K562 (cell line): ENCODE measurements at regions of chr1 and their contacts with region 1.

Region 1: DNA sequence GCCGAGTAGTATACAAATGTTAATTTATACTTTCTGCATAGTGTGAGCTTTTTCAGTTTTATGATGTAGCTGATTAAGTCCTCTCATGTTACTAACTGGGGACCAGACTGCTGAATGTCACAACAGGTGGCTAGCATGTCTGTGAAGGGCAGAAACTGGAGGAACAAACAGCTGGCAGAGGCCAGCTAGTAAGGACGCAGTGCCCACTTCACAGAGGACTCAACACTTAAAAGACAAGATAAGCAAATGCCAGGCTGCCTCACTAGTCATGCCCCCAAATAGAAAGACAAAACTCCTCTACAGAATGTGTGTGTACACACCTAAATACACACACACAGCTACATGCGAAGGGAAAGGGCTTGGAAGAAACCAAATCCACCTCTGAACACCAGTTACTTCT is 73.8 kb upstream of the ZNF678 start:
- DNase-seq: no peak
- ATAC-seq: no peak
- H3K4me3 ChIP-seq: no peak overlapping the region
- H3K27ac ChIP-seq: no peak overlapping the region
- H3K4me1 ChIP-seq: no peaks in the 10 kb centered on the region
- H3K27me3 ChIP-seq: peaks cover 0 to 15% of the 10 kb centered on the region in 2 experiments; a peak in 2 of 5 replicates
- CTCF ChIP-seq: no peak
- EP300 ChIP-seq: no peak
- POLR2A ChIP-seq: no peak
- RAD21 ChIP-seq: no peak

Region 2: GRCh38 chr1:227666286-227666685 is 176.7 kb after region 1 on chr1:
- CTCF ChIA-PET with region 1: no interaction called
- POLR2A ChIA-PET with region 1: no interaction called
- in situ Hi-C with region 1: no loop called
- intact Hi-C with region 1: loop called (anchors 10 kb)
- DNase-seq: no peak
- ATAC-seq: no peak
- H3K4me3 ChIP-seq: no peak overlapping the region
- H3K27ac ChIP-seq: no peak overlapping the region
- H3K4me1 ChIP-seq: no peaks in the 10 kb centered on the region
- H3K27me3 ChIP-seq: no peaks in the 10 kb centered on the region
- CTCF ChIP-seq: no peak
- EP300 ChIP-seq: no peak
- POLR2A ChIP-seq: no peak
- RAD21 ChIP-seq: no peak

Region 3: DNA sequence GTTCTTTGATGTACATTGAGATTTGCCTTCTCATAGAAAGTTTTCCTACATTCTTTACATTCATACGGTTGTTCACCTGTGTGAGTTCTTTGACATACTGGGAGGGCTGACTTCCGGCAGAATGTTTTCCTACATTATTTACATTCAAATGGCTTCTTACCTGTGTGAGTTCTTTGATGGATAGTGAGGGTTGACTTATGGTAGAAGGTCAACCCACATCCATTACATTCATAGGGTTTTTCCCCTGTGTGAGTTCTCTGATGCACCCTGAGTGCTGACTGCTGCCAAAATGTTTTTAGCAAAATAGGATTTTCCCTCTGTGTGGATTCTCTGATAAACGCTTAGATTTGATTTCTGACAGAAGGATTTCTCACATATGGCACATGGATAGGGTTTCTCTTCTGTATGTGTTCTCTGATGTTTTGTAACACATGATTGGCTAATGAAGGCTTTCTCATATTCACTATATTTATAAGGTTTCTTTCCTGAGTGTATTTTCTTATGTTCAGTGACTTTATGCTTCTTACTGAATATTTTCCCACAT is 207.8 kb after region 1 on chr1:
- CTCF ChIA-PET with region 1: no interaction called
- POLR2A ChIA-PET with region 1: no interaction called
- in situ Hi-C with region 1: no loop called
- intact Hi-C with region 1: loop called (anchors 10 kb)
- DNase-seq: no peak
- ATAC-seq: no peak
- H3K4me3 ChIP-seq: no peak overlapping the region
- H3K27ac ChIP-seq: no peak overlapping the region
- H3K4me1 ChIP-seq: no peaks in the 10 kb centered on the region
- H3K27me3 ChIP-seq: no peaks in the 10 kb centered on the region
- CTCF ChIP-seq: no peak
- EP300 ChIP-seq: no peak
- POLR2A ChIP-seq: no peak
- RAD21 ChIP-seq: no peak